Activated CD4-positive, alpha-beta memory T cell treated with anti-CD3 and anti-CD28 coated beads, Interleukin-2, amount 10 ng/mL, durations not matched to agents 7 days and 5 days (primary cell): ENCODE measurements at regions of chr5 and their contacts with region 1.

Region 1: GRCh38 chr5:35822511-35822910 is 34.2 kb upstream of the IL7R start:
- DNase-seq: peak; percentile 60
- H3K4me3 Mint-ChIP-seq: peak overlapping the region; percentile 12
- H3K27ac Mint-ChIP-seq: peak overlapping the region; percentile 79
- H3K4me1 Mint-ChIP-seq: peaks cover 88% of the 10 kb centered on the region
- H3K27me3 Mint-ChIP-seq: no peaks in the 10 kb centered on the region

Region 2: GRCh38 chr5:35838370-35839042 is 16.0 kb after region 1 on chr5:
- CTCF ChIA-PET with region 1: interaction called, 3 read pairs
- POLR2A ChIA-PET with region 1: interaction called, 64 read pairs
- DNase-seq: no peak
- H3K4me3 Mint-ChIP-seq: no peak overlapping the region
- H3K27ac Mint-ChIP-seq: peak overlapping the region; percentile 19
- H3K4me1 Mint-ChIP-seq: peaks cover 57% of the 10 kb centered on the region
- H3K27me3 Mint-ChIP-seq: no peaks in the 10 kb centered on the region

Region 3: GRCh38 chr5:35857606-35858205 is 35.2 kb after region 1 on chr5:
- CTCF ChIA-PET with region 1: interaction called, 12 read pairs
- POLR2A ChIA-PET with region 1: interaction called, 422 read pairs
- DNase-seq: no peak
- H3K4me3 Mint-ChIP-seq: peak overlapping the region; percentile 76
- H3K27ac Mint-ChIP-seq: peak overlapping the region; percentile 82
- H3K4me1 Mint-ChIP-seq: peaks cover 87% of the 10 kb centered on the region
- H3K27me3 Mint-ChIP-seq: no peaks in the 10 kb centered on the region

Region 4: GRCh38 chr5:36397901-36398536 is 575.5 kb after region 1 on chr5:
- CTCF ChIA-PET with region 1: no interaction called
- POLR2A ChIA-PET with region 1: no interaction called
- DNase-seq: no peak
- H3K4me3 Mint-ChIP-seq: no peak overlapping the region
- H3K27ac Mint-ChIP-seq: no peak overlapping the region
- H3K4me1 Mint-ChIP-seq: no peaks in the 10 kb centered on the region
- H3K27me3 Mint-ChIP-seq: peaks cover 4% of the 10 kb centered on the region